ENCODE measurements at regions of chr18 and their contacts with region 1.

Region 1: DNA sequence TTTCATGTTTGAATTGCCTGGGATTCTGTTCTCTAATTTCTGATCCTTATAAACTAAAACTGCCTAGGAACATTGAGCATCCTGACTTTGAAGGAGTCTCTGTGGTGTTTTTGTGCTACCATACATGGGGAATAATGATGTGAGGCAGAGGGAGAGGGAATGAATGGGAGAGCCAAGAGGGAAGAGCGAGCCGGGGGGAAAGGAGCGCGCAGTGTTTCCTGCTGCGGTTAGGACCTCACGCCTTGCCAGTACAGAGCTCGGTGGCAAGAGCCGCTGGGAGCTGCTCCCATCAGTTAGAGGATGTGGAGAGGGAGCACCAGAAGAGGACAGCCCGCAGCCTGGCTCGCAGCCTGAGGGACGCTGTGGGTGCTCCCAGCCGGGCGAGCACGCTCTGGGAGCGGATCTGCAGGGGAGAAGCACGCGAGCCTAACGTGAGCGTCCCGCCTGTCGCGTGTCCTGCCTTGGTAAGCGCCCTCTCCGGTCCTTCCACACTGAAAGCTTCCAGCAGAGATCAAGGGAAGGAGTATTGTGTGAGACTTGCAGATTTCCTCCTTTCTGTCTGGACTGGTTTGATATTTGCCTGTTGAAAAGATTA is 114.7 kb downstream of the FAM210A start:
- DNase-seq: no peak
- ATAC-seq: peak; percentile 0
- H3K4me3 ChIP-seq: peak overlapping the region; percentile 73
- H3K27ac ChIP-seq: peak overlapping the region; percentile 84
- H3K4me1 ChIP-seq: peaks cover 75% of the 10 kb centered on the region
- H3K27me3 ChIP-seq: no peaks in the 10 kb centered on the region
- CTCF ChIP-seq: no peak
- EP300 ChIP-seq: no peak
- POLR2A ChIP-seq: no peak
- RAD21 ChIP-seq: no peak

Region 2: GRCh38 chr18:13566941-13567746 is 44.6 kb before region 1 on chr18:
- CTCF ChIA-PET with region 1: interaction called, 235 read pairs
- POLR2A ChIA-PET with region 1: interaction called, 175 read pairs
- RAD21 ChIA-PET with region 1: interaction called, 337 read pairs
- SMC1A ChIA-PET with region 1: interaction called, 372 read pairs
- in situ Hi-C with region 1: loop called (anchors 5 kb)
- intact Hi-C with region 1: loop called (anchors 1 kb)
- DNase-seq: peak; percentile 89
- ATAC-seq: peak; percentile 71
- H3K4me3 ChIP-seq: peak overlapping the region; percentile 57
- H3K27ac ChIP-seq: peak overlapping the region; percentile 100
- H3K4me1 ChIP-seq: peaks cover 76% of the 10 kb centered on the region
- H3K27me3 ChIP-seq: no peaks in the 10 kb centered on the region
- CTCF ChIP-seq: 0 out of 6 replicates have a peak, but pooled peaks of 1 of the 3 experiments have one; percentile 7
- EP300 ChIP-seq: peak; percentile 84 to 97; a peak in 3 of 4 replicates
- POLR2A ChIP-seq: peak; percentile 91
- RAD21 ChIP-seq: peak; percentile 21; the same call in 1 of the 2 replicates

Region 3: DNA sequence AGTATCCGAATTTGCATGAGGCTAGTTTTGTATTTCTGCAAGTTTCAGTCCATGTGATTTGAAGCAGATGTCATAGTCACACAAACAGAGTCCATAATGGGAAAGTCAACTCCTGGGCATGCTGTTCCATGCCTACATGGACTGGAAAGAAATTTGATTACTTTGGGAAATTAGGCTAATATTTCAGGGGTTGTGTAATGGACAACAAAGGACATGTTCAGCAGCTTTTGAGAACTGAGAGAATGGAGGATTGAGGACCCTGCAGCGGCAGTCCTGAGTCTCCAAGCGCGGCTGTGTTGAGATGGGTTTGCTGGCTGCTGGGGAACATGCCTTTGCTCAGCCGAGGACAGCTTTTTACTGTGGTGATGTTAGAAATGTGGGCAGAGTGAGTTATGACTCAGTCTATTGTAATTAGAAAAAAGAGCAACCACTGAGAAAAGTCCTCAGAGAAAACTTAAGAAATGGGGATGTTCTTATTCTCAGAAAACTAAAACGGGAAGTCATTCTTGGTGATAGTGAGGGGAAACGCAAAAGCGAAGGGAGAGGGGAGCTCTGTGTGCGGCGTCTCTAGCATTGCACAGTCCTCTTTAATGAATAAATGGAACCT is 34.5 kb before region 1 on chr18:
- CTCF ChIA-PET with region 1: interaction called, 75 read pairs
- POLR2A ChIA-PET with region 1: interaction called, 108 read pairs
- RAD21 ChIA-PET with region 1: interaction called, 229 read pairs
- SMC1A ChIA-PET with region 1: interaction called, 220 read pairs
- in situ Hi-C with region 1: no loop called
- intact Hi-C with region 1: loop called (anchors 1 kb)
- DNase-seq: peak; percentile 90
- ATAC-seq: peak; percentile 93
- H3K4me3 ChIP-seq: peak overlapping the region; percentile 51
- H3K27ac ChIP-seq: peak overlapping the region; percentile 92
- H3K4me1 ChIP-seq: peaks cover 33% of the 10 kb centered on the region
- H3K27me3 ChIP-seq: no peaks in the 10 kb centered on the region
- CTCF ChIP-seq: no peak
- EP300 ChIP-seq: peak; percentile 89 to 93
- POLR2A ChIP-seq: peak; percentile 79
- RAD21 ChIP-seq: no peak

Region 4: GRCh38 chr18:13585379-13586153 is 26.1 kb before region 1 on chr18:
- CTCF ChIA-PET with region 1: interaction called, 16 read pairs
- POLR2A ChIA-PET with region 1: interaction called, 67 read pairs
- RAD21 ChIA-PET with region 1: interaction called, 105 read pairs
- SMC1A ChIA-PET with region 1: interaction called, 164 read pairs
- in situ Hi-C with region 1: no loop called
- intact Hi-C with region 1: loop called (anchors 1 kb)
- DNase-seq: no peak
- ATAC-seq: peak; percentile 66
- H3K4me3 ChIP-seq: no peak overlapping the region
- H3K27ac ChIP-seq: peak overlapping the region; percentile 54
- H3K4me1 ChIP-seq: peaks cover 29% of the 10 kb centered on the region
- H3K27me3 ChIP-seq: no peaks in the 10 kb centered on the region
- CTCF ChIP-seq: no peak
- EP300 ChIP-seq: peak; percentile 15 to 46; a peak in 3 of 4 replicates
- POLR2A ChIP-seq: no peak
- RAD21 ChIP-seq: no peak

Region 5: DNA sequence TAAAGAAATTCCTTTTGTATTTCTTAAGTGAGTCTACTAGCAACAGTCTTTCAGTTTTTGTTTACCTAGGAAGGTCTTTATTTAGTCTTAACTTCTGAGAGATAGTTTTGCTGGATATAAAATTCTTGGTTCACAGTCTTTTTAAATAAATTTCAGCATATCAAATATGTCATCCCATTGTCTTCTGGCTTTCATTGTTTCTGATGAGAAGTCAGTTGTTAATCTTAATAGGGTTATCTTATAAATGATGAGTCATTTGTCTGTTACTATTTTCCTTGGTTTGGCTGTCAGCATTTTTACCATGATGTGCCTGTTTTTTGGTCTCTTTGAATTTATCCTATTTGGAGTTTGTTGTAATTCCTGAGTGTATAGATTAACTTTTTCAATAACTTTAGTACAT is 14.6 kb before region 1 on chr18:
- CTCF ChIA-PET with region 1: interaction called, 4 read pairs
- POLR2A ChIA-PET with region 1: interaction called, 9 read pairs
- RAD21 ChIA-PET with region 1: interaction called, 4 read pairs
- SMC1A ChIA-PET with region 1: interaction called, 13 read pairs
- in situ Hi-C with region 1: no loop called
- intact Hi-C with region 1: no loop called
- DNase-seq: no peak
- ATAC-seq: no peak
- H3K4me3 ChIP-seq: no peak overlapping the region
- H3K27ac ChIP-seq: no peak overlapping the region
- H3K4me1 ChIP-seq: 0 out of 2 replicates have a peak, but pooled peaks cover 3% of the 10 kb centered on the region
- H3K27me3 ChIP-seq: no peaks in the 10 kb centered on the region
- CTCF ChIP-seq: no peak
- EP300 ChIP-seq: no peak
- POLR2A ChIP-seq: no peak
- RAD21 ChIP-seq: no peak

Region 6: DNA sequence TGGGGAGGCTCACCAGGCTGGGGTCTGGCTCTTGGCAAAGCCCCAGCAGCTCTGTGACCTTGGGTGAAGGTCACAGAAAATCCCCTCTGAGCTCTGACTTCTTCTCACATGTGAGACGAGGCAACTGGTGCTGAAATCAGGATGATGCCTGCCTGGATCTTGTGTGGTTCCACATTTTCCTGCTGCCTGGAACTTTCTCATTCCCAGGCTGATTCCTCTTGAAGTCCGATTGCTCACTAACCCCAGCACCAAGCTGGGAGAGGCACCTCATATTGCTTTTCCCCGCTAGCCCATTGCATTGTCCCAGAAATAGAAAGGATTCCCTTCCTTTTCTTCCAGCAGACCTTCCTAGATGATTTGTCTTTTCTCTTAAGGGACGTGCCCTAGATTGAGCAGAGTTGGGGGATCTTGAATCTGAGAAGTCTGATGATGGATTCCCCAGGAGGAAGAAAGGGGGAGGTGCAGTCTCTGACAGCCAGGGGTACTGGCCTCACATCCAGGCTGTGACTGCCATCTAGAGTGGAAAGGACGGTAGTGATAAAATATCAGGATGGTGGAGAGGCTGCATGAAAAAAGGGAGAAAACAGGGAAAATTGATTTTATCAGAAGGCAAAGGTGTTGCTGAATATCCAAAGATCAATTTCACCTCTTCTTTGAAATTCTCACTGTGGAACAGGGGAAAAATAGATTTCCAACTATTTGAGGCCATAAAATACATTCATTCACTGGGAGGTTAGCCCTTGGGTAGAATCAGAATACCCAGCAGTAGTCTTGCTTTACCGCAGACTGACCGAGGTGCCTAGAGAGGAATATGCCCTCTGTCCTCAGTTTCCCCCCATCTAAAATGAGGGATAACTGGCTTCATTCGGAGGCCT is 18.4 kb after region 1 on chr18:
- CTCF ChIA-PET with region 1: interaction called, 32 read pairs
- POLR2A ChIA-PET with region 1: interaction called, 5 read pairs
- RAD21 ChIA-PET with region 1: interaction called, 39 read pairs
- SMC1A ChIA-PET with region 1: interaction called, 40 read pairs
- in situ Hi-C with region 1: no loop called
- intact Hi-C with region 1: no loop called
- DNase-seq: peak; percentile 48
- ATAC-seq: peak; percentile 92
- H3K4me3 ChIP-seq: no peak overlapping the region
- H3K27ac ChIP-seq: no peak overlapping the region; the same call in 1 of the 2 replicates
- H3K4me1 ChIP-seq: peaks cover 5% of the 10 kb centered on the region
- H3K27me3 ChIP-seq: no peaks in the 10 kb centered on the region
- CTCF ChIP-seq: peak; percentile 76 to 98 (median 81)
- EP300 ChIP-seq: no peak
- POLR2A ChIP-seq: no peak
- RAD21 ChIP-seq: peak; percentile 100

Region 7: GRCh38 chr18:13726232-13726971 is 114.7 kb after region 1 on chr18 and contains the starts of genes FAM210A and RNMT:
- CTCF ChIA-PET with region 1: interaction called, 3 read pairs
- POLR2A ChIA-PET with region 1: no interaction called
- RAD21 ChIA-PET with region 1: interaction called, 9 read pairs
- SMC1A ChIA-PET with region 1: interaction called, 3 read pairs
- in situ Hi-C with region 1: no loop called
- intact Hi-C with region 1: loop called (anchors 5 kb)
- DNase-seq: peak; percentile 86
- ATAC-seq: peak; percentile 95
- H3K4me3 ChIP-seq: peak within 1 kb of the TSS; percentile 87
- H3K27ac ChIP-seq: peak within 1 kb of the TSS; percentile 84
- H3K4me1 ChIP-seq: peaks cover 5% of the 10 kb centered on the region
- H3K27me3 ChIP-seq: no peaks in the 10 kb centered on the region
- CTCF ChIP-seq: peak in 2 of 3 experiments; percentile 3 to 43; a peak in 2 of 6 replicates
- EP300 ChIP-seq: peak; percentile 43; a peak in 2 of 4 replicates
- POLR2A ChIP-seq: peak; percentile 89
- RAD21 ChIP-seq: no peak
- polyA plus RNA-seq, gene FAM210A: 10.3 to 12.7 TPM
- polyA plus RNA-seq, gene RNMT: 44.5 to 63.2 TPM

Measured in GM12878 (cell line).